ENCODE measurements at regions of chr2 and their contacts with region 1.

Region 1: GRCh38 chr2:225660262-225661131 is 261.0 kb downstream of the NYAP2 start:
- DNase-seq: peak; percentile 54 to 76 (median 63)
- ATAC-seq: peak; percentile 94
- H3K4me3 ChIP-seq: no peak overlapping the region
- H3K27ac ChIP-seq: no peak overlapping the region
- H3K4me1 ChIP-seq: no peaks in the 10 kb centered on the region
- H3K27me3 ChIP-seq: no peaks in the 10 kb centered on the region
- CTCF ChIP-seq: peak; percentile 59 to 81

Region 2: DNA sequence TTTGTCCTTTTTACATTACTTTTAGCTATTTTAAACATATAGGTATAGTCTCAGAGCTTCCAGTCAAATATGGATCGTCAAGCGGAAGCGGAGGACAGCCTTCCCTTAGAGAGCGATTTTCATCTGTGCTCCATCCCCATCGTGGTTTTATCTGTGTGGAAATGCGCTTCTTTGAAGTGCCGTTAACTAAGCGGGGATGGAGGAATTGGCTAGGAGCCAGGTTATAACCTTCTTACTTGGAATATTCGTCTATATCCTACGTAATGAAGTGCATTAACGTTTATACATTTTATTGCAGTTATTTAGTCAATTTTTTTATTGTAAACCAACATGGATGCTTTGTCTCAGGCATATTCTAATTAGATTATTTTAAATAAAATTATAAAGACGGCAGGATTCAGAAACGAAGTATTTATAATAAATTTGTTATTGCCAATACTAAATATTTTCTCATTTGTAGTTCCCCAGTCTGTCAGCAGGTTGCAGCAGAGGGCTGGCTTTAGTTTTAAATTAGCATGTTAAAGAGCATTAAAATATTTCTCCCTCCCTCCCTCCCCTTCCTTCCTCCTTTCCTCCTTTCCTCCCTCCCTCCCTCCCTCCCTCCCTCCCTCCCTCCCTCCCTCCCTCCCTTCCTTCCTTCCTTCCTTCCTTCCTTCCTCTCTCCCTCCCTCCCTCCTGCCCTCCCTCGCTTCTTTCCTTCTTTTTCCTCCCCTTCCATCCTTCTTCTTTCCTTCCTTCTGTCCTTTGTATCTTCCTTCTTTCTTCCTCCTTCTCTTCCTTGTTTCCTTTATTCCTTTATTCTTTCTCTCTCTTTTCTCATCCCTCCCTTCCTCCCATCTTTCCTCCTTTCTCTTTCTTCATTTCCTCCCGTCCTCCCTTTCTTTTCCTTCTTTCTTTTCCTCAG is 537.7 kb before region 1 on chr2:
- intact Hi-C with region 1: loop called in 1 of 2 experiments (anchors 5 kb)
- DNase-seq: peak in 1 of 4 donors; percentile 15
- ATAC-seq: peak; percentile 23
- H3K4me3 ChIP-seq: no peak overlapping the region
- H3K27ac ChIP-seq: no peak overlapping the region
- H3K4me1 ChIP-seq: no peaks in the 10 kb centered on the region
- H3K27me3 ChIP-seq: no peaks in the 10 kb centered on the region
- CTCF ChIP-seq: peak; percentile 28 to 51

Measured in left lung (tissue), 14 donors.